B cell (primary cell): ENCODE measurements at regions of chr12 and their contacts with region 1.

Region 1: GRCh38 chr12:75390899-75391538 is at the start of gene GLIPR1L2:
- DNase-seq: peak; percentile 94
- ATAC-seq: peak; percentile 94
- H3K4me3 ChIP-seq: peak within 1 kb of the TSS; percentile 66 to 85 (median 75)
- H3K4me3 Mint-ChIP-seq: peak within 1 kb of the TSS; percentile 98
- H3K27ac ChIP-seq: peak within 1 kb of the TSS; percentile 73 to 85
- H3K27ac Mint-ChIP-seq: peak within 1 kb of the TSS; percentile 99
- H3K4me1 ChIP-seq: peaks cover 23 to 24% of the 10 kb centered on the region in 2 donors
- H3K4me1 Mint-ChIP-seq: peaks cover 33% of the 10 kb centered on the region
- H3K27me3 ChIP-seq: no peaks in the 10 kb centered on the region
- H3K27me3 Mint-ChIP-seq: no peaks in the 10 kb centered on the region
- CTCF ChIP-seq: peak; percentile 81
- total RNA-seq, gene GLIPR1L2: 0.46 and 0.91 TPM in 2 replicates

Region 2: GRCh38 chr12:75334384-75335030 is 56.5 kb before region 1 on chr12 and contains the start of gene GLIPR1L1:
- CTCF ChIA-PET with region 1: interaction called, 12 read pairs
- POLR2A ChIA-PET with region 1: no interaction called
- intact Hi-C with region 1: loop called (anchors 1 kb)
- DNase-seq: peak; percentile 86
- ATAC-seq: peak; percentile 83
- H3K4me3 ChIP-seq: peak within 1 kb of the TSS in 2 of 5 experiments; percentile 33 to 41
- H3K4me3 Mint-ChIP-seq: peak within 1 kb of the TSS; percentile 76
- H3K27ac ChIP-seq: no peak within 1 kb of the TSS
- H3K27ac Mint-ChIP-seq: no peak within 1 kb of the TSS
- H3K4me1 ChIP-seq: peaks cover 16% of the 10 kb centered on the region in 2 donors
- H3K4me1 Mint-ChIP-seq: peaks cover 18% of the 10 kb centered on the region
- H3K27me3 ChIP-seq: peaks cover 0 to 14% (median 6%) of the 10 kb centered on the region in 4 experiments
- H3K27me3 Mint-ChIP-seq: peaks cover 25% of the 10 kb centered on the region
- CTCF ChIP-seq: peak; percentile 93
- total RNA-seq, gene GLIPR1L1: not detected in 2 replicates

Region 3: DNA sequence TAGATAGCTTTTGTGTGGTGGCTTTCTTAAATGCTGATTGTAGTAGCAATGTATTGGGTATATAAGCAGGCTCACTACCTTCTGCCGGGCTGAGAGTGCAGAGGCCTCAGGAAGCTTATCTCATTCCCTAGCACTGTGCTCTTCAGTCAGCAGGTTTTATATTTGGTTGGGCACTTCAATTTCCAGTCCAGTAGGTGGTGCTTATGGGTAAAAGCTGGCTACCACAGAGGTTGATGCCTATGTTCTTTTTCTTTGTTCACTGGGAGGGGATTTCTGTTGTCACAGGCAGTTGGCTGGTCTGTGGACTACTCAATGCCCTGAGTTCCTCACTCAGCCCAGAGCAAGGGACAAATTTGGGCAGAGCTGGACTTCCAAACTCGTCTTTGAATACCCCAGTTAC is 46.5 kb after region 1 on chr12:
- CTCF ChIA-PET with region 1: interaction called, 15 read pairs
- POLR2A ChIA-PET with region 1: no interaction called
- intact Hi-C with region 1: no loop called
- DNase-seq: peak; percentile 65
- ATAC-seq: peak; percentile 86
- H3K4me3 ChIP-seq: no peak overlapping the region
- H3K4me3 Mint-ChIP-seq: no peak overlapping the region
- H3K27ac ChIP-seq: no peak overlapping the region
- H3K27ac Mint-ChIP-seq: no peak overlapping the region
- H3K4me1 ChIP-seq: peaks cover 0 to 6% of the 10 kb centered on the region in 2 donors
- H3K4me1 Mint-ChIP-seq: peaks cover 9% of the 10 kb centered on the region
- H3K27me3 ChIP-seq: no peaks in the 10 kb centered on the region
- H3K27me3 Mint-ChIP-seq: peaks cover 7% of the 10 kb centered on the region
- CTCF ChIP-seq: peak; percentile 60

Region 4: GRCh38 chr12:75489613-75490210 is 98.7 kb after region 1 on chr12:
- CTCF ChIA-PET with region 1: interaction called, 92 read pairs
- POLR2A ChIA-PET with region 1: no interaction called
- intact Hi-C with region 1: loop called (anchors 1 kb)
- DNase-seq: no peak
- ATAC-seq: peak; percentile 21
- H3K4me3 ChIP-seq: no peak overlapping the region
- H3K4me3 Mint-ChIP-seq: no peak overlapping the region
- H3K27ac ChIP-seq: peak overlapping the region in 1 of 2 donors; percentile 28
- H3K27ac Mint-ChIP-seq: peak overlapping the region; percentile 5
- H3K4me1 ChIP-seq: peaks cover 9 to 16% of the 10 kb centered on the region in 2 donors
- H3K4me1 Mint-ChIP-seq: peaks cover 50% of the 10 kb centered on the region
- H3K27me3 ChIP-seq: no peaks in the 10 kb centered on the region
- H3K27me3 Mint-ChIP-seq: no peaks in the 10 kb centered on the region
- CTCF ChIP-seq: no peak

Region 5: DNA sequence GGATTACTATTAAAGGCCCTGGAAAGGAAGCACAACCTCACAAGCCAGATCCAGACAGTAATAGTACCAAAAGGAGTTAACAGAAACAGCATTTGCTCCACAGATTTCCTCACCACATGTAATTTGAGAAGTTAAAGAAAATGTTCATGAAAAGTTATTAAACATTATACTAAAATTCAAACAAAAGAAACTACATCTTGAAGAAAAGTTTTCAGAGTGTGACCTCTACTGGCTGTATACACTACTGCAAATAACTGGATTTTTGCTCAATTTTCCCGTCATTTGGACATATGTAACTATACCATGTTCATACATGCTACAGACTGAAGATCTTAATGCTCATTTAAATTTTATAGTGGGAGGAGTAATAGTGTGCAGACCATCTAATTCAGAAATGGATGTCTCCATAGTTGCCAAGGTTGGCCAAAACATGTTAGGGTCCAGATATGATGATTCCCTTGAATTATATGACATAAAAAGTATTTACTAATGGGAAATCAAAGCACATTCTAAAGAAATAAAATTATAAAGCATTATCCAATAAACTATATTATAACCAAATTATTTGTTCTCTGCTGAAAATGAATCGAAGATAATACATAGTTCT is 114.8 kb after region 1 on chr12:
- CTCF ChIA-PET with region 1: interaction called, 15 read pairs
- POLR2A ChIA-PET with region 1: no interaction called
- intact Hi-C with region 1: loop called (anchors 1 kb)
- DNase-seq: peak; percentile 53
- ATAC-seq: peak; percentile 57
- H3K4me3 ChIP-seq: no peak overlapping the region
- H3K4me3 Mint-ChIP-seq: no peak overlapping the region
- H3K27ac ChIP-seq: peak overlapping the region; percentile 4 to 37
- H3K27ac Mint-ChIP-seq: no peak overlapping the region
- H3K4me1 ChIP-seq: peaks cover 5 to 12% of the 10 kb centered on the region in 2 donors
- H3K4me1 Mint-ChIP-seq: peaks cover 18% of the 10 kb centered on the region
- H3K27me3 ChIP-seq: no peaks in the 10 kb centered on the region
- H3K27me3 Mint-ChIP-seq: no peaks in the 10 kb centered on the region
- CTCF ChIP-seq: peak; percentile 82

Region 6: GRCh38 chr12:75511116-75512048 is 120.4 kb after region 1 on chr12 and contains the start of gene KRR1:
- CTCF ChIA-PET with region 1: interaction called, 15 read pairs
- POLR2A ChIA-PET with region 1: interaction called, 5 read pairs
- intact Hi-C with region 1: loop called (anchors 1 kb)
- DNase-seq: peak; percentile 95
- ATAC-seq: peak; percentile 97
- H3K4me3 ChIP-seq: peak within 1 kb of the TSS; percentile 61 to 100 (median 93)
- H3K4me3 Mint-ChIP-seq: peak within 1 kb of the TSS; percentile 93
- H3K27ac ChIP-seq: peak within 1 kb of the TSS; percentile 72 to 83
- H3K27ac Mint-ChIP-seq: peak within 1 kb of the TSS; percentile 95
- H3K4me1 ChIP-seq: peaks cover 11 to 18% of the 10 kb centered on the region in 2 donors
- H3K4me1 Mint-ChIP-seq: peaks cover 28% of the 10 kb centered on the region
- H3K27me3 ChIP-seq: no peaks in the 10 kb centered on the region
- H3K27me3 Mint-ChIP-seq: no peaks in the 10 kb centered on the region
- CTCF ChIP-seq: no peak
- total RNA-seq, gene KRR1: 80.2 and 87.7 TPM in 2 replicates

Region 7: DNA sequence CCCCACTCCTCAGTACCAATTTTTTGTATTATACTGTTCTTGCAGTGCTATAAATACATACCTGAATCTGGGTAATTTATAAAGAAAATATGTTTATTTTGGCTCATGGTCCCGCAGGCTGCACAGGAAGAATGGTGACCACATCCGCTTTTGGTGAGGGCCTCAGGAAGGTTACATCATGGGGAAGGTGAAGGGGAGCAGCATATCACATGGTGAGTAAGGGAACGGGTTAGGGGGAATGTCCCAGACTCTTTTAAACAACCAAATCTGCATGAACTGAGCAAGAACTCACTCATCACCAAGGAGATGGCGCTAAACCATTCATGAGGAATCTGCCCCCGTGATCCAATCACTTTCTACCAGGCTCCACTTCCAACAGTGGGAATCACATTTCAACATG is 1128.5 kb after region 1 on chr12:
- CTCF ChIA-PET with region 1: no interaction called
- POLR2A ChIA-PET with region 1: no interaction called
- intact Hi-C with region 1: loop called (anchors 5 kb)
- DNase-seq: peak; percentile 9
- ATAC-seq: no peak
- H3K4me3 ChIP-seq: no peak overlapping the region
- H3K4me3 Mint-ChIP-seq: peak overlapping the region; percentile 31
- H3K27ac ChIP-seq: peak overlapping the region in 1 of 2 donors; percentile 14
- H3K27ac Mint-ChIP-seq: no peak overlapping the region
- H3K4me1 ChIP-seq: peaks cover 12 to 14% of the 10 kb centered on the region in 2 donors
- H3K4me1 Mint-ChIP-seq: peaks cover 41% of the 10 kb centered on the region
- H3K27me3 ChIP-seq: no peaks in the 10 kb centered on the region
- H3K27me3 Mint-ChIP-seq: no peaks in the 10 kb centered on the region
- CTCF ChIP-seq: no peak